GM12878 (cell line): ENCODE measurements at regions of chr6 and their contacts with region 1.

Region 1: DNA sequence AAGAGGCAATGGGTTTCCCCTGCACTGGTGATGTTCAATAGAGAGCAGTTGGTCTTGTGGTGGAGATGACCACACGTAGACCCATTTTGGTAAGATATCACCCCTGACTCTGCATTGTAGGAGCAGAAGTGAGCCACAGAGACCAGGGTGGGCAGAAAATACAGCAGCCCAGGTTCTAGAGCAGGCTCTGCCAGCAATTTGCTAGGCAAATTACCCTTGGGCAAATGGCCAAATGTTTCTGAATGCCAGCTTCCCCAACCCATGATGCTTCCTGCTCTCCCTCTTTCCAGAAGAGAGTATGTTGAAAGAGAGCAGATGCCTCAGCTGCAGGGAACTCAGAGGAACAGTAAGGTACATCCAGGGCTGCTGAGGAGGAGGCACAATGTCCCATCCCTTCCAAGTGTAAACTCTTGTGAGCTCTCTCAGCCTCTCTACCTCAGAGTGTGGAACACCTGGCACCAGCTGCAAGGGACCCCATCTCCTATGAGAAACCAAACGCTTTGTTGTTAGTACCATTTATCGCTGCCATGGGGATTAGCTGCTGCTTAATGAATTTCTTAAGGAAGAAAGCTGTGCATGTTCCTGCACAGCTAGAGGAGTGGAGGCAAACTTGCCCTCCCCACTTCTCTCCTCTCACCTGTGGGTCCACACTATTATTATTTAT is 317.5 kb upstream of the MOCS1 start:
- DNase-seq: peak; percentile 63
- ATAC-seq: peak; percentile 71
- H3K4me3 ChIP-seq: no peak overlapping the region
- H3K27ac ChIP-seq: no peak overlapping the region
- H3K4me1 ChIP-seq: no peaks in the 10 kb centered on the region; the same call in 1 of the 2 replicates
- H3K27me3 ChIP-seq: no peaks in the 10 kb centered on the region; a peak in 1 of 4 replicates
- CTCF ChIP-seq: no peak
- EP300 ChIP-seq: peak; percentile 78 to 81; a peak in 3 of 4 replicates
- POLR2A ChIP-seq: no peak
- RAD21 ChIP-seq: no peak

Region 2: GRCh38 chr6:40138273-40138720 is 113.5 kb before region 1 on chr6:
- CTCF ChIA-PET with region 1: no interaction called
- POLR2A ChIA-PET with region 1: interaction called, 3 read pairs
- RAD21 ChIA-PET with region 1: interaction called, 12 read pairs
- SMC1A ChIA-PET with region 1: interaction called, 21 read pairs
- in situ Hi-C with region 1: no loop called
- intact Hi-C with region 1: no loop called
- DNase-seq: peak; percentile 27
- ATAC-seq: peak; percentile 82
- H3K4me3 ChIP-seq: no peak overlapping the region
- H3K27ac ChIP-seq: no peak overlapping the region
- H3K4me1 ChIP-seq: no peaks in the 10 kb centered on the region
- H3K27me3 ChIP-seq: no peaks in the 10 kb centered on the region
- CTCF ChIP-seq: no peak
- EP300 ChIP-seq: 0 out of 4 replicates have a peak, but pooled peaks of 1 of the 2 experiments have one; percentile 41
- POLR2A ChIP-seq: no peak
- RAD21 ChIP-seq: no peak

Region 3: GRCh38 chr6:40148882-40149573 is 102.7 kb before region 1 on chr6:
- CTCF ChIA-PET with region 1: interaction called, 5 read pairs
- POLR2A ChIA-PET with region 1: interaction called, 14 read pairs
- RAD21 ChIA-PET with region 1: interaction called, 16 read pairs
- SMC1A ChIA-PET with region 1: interaction called, 35 read pairs
- in situ Hi-C with region 1: no loop called
- intact Hi-C with region 1: loop called (anchors 2 kb)
- DNase-seq: peak; percentile 88
- ATAC-seq: peak; percentile 97
- H3K4me3 ChIP-seq: no peak overlapping the region
- H3K27ac ChIP-seq: peak overlapping the region; percentile 60
- H3K4me1 ChIP-seq: peaks cover 11% of the 10 kb centered on the region
- H3K27me3 ChIP-seq: no peaks in the 10 kb centered on the region
- CTCF ChIP-seq: no peak
- EP300 ChIP-seq: peak; percentile 94 to 100
- POLR2A ChIP-seq: no peak
- RAD21 ChIP-seq: no peak

Region 4: DNA sequence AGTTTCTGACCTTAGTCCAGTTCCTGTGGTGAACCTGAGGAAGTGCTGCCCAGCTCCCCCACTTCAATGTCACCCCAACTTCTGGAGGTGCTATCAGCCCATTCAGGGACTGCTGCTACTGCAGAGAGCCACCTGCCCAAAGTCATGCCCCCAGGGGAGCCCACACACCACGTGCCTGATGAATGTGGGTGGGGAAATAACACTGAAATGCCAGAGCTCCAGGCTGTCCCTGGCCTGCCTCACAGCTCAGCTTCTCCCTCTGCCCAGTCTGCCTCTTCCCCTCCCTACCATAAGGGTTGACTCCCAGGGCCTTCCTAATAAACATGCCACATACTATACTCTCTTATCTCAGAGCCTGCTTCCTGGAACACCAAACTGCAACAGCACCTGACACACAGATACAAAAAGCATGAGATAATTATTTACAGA is 41.1 kb before region 1 on chr6:
- CTCF ChIA-PET with region 1: interaction called, 10 read pairs
- POLR2A ChIA-PET with region 1: interaction called, 8 read pairs
- RAD21 ChIA-PET with region 1: interaction called, 7 read pairs
- SMC1A ChIA-PET with region 1: interaction called, 9 read pairs
- in situ Hi-C with region 1: no loop called
- intact Hi-C with region 1: no loop called
- DNase-seq: no peak
- ATAC-seq: peak; percentile 84
- H3K4me3 ChIP-seq: no peak overlapping the region
- H3K27ac ChIP-seq: no peak overlapping the region
- H3K4me1 ChIP-seq: no peaks in the 10 kb centered on the region; the same call in 1 of the 2 replicates
- H3K27me3 ChIP-seq: no peaks in the 10 kb centered on the region
- CTCF ChIP-seq: no peak
- EP300 ChIP-seq: no peak
- POLR2A ChIP-seq: no peak
- RAD21 ChIP-seq: no peak

Region 5: DNA sequence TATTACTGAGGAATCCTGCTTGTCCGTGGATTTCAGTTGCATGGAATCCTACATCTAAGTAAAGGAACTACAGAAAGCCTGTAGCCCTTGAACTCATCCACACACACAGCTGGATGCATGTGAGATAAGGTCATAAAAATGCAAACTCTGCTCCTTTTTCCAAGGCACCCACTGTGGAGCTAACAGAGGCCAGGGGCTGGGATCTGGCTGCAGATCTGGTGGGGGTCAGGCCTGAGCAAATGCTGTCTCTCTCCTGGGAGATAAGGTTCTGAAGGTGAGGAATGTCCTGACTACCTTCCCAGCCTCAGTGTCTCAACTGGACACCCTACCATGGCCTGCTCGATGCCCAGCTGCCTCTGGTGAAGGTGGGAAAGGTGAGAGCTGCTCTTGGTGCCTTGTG is 13.8 kb after region 1 on chr6:
- CTCF ChIA-PET with region 1: interaction called, 4 read pairs
- POLR2A ChIA-PET with region 1: interaction called, 4 read pairs
- RAD21 ChIA-PET with region 1: interaction called, 4 read pairs
- SMC1A ChIA-PET with region 1: interaction called, 21 read pairs
- in situ Hi-C with region 1: no loop called
- intact Hi-C with region 1: no loop called
- DNase-seq: no peak
- ATAC-seq: no peak
- H3K4me3 ChIP-seq: no peak overlapping the region
- H3K27ac ChIP-seq: no peak overlapping the region
- H3K4me1 ChIP-seq: no peaks in the 10 kb centered on the region
- H3K27me3 ChIP-seq: no peaks in the 10 kb centered on the region; a peak in 1 of 4 replicates
- CTCF ChIP-seq: no peak
- EP300 ChIP-seq: no peak
- POLR2A ChIP-seq: no peak
- RAD21 ChIP-seq: no peak

Region 6: GRCh38 chr6:40295251-40295949 is 43.6 kb after region 1 on chr6:
- CTCF ChIA-PET with region 1: interaction called, 9 read pairs
- POLR2A ChIA-PET with region 1: interaction called, 4 read pairs
- RAD21 ChIA-PET with region 1: interaction called, 26 read pairs
- SMC1A ChIA-PET with region 1: interaction called, 15 read pairs
- in situ Hi-C with region 1: no loop called
- intact Hi-C with region 1: no loop called
- DNase-seq: no peak
- ATAC-seq: no peak
- H3K4me3 ChIP-seq: no peak overlapping the region
- H3K27ac ChIP-seq: no peak overlapping the region
- H3K4me1 ChIP-seq: no peaks in the 10 kb centered on the region
- H3K27me3 ChIP-seq: peaks cover 0 to 2% of the 10 kb centered on the region in 2 experiments; a peak in 1 of 4 replicates
- CTCF ChIP-seq: no peak
- EP300 ChIP-seq: no peak
- POLR2A ChIP-seq: no peak
- RAD21 ChIP-seq: no peak